ENCODE measurements at regions of chr1 and their contacts with region 1.

Region 1: DNA sequence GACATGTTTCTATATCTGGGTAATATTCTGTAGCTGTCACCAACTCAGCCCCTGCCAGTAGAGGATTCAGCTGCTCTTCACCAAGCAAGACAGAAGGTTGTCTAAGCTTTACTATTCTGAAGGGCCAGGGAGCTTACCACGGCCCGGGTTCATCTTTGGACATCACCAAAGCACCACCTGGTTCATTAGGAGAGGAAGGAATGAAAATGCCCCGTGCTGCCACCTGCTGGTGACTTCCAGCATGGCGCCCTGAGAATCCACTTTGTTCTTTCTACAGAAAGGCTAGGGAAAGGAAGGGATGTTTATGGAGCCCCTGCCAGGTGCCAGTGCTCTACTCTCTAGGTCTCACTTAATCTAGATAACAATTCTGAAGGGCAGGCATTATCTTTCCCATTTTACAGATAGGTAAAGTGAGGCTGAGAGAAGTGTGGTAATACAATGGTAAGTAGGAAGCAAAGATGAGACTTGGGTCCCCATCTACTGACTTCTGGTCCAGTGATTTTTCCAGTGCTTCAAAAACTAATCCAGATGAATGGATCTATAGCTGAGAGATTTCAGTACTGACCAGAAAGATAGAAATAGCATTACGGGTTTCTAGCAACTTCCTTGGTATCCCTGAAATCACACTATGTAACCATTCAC is 79.5 kb downstream of the BEND5 start:
- DNase-seq: peak in 4 of 5 donors; percentile 64 to 75 (median 69)
- H3K4me3 ChIP-seq: no peak overlapping the region
- H3K27ac ChIP-seq: peak overlapping the region in 1 of 2 donors; percentile 26
- H3K4me1 ChIP-seq: peaks cover 0 to 20% (median 19%) of the 10 kb centered on the region in 3 donors
- H3K27me3 ChIP-seq: no peaks in the 10 kb centered on the region
- CTCF ChIP-seq: peak; percentile 90

Region 2: DNA sequence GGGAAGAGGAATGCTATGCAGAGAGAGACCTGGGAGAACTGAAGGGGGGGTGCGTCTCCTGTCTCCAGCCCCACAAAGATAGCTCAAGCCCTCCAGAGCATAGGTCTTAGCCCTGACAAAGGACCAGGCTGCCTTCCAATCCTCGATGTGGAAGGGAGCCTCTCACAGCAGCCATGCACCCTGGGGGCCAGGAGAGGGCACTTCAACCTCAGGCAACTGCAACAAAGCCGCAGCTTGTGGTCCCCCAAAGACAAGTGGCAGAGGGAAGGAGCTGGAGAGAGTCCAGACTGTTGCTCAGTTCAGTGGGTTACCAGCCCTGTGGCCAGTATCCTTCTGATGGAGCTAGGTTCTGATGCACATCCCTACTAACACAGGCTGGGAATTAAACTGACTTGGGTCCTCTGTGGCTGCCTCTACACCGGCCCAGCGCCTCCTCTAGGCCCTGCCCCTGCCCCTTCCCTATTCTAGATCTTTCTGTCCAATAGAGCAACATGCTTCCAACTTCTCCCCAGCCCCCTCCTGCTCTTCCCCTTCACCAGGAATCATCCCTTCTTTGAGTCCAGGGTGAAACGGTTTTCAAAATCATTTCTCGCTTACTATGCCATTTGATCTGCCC is 124.4 kb before region 1 on chr1:
- intact Hi-C with region 1: loop called (anchors 10 kb)
- DNase-seq: peak; percentile 74 to 88 (median 83)
- H3K4me3 ChIP-seq: no peak overlapping the region
- H3K27ac ChIP-seq: no peak overlapping the region
- H3K4me1 ChIP-seq: peaks cover 0 to 5% (median 0%) of the 10 kb centered on the region in 3 donors
- H3K27me3 ChIP-seq: no peaks in the 10 kb centered on the region
- CTCF ChIP-seq: peak; percentile 75

Measured in kidney (tissue), 22 donors.